GM10248 (cell line): ENCODE measurements at regions of chr22 and their contacts with region 1.

Region 1: DNA sequence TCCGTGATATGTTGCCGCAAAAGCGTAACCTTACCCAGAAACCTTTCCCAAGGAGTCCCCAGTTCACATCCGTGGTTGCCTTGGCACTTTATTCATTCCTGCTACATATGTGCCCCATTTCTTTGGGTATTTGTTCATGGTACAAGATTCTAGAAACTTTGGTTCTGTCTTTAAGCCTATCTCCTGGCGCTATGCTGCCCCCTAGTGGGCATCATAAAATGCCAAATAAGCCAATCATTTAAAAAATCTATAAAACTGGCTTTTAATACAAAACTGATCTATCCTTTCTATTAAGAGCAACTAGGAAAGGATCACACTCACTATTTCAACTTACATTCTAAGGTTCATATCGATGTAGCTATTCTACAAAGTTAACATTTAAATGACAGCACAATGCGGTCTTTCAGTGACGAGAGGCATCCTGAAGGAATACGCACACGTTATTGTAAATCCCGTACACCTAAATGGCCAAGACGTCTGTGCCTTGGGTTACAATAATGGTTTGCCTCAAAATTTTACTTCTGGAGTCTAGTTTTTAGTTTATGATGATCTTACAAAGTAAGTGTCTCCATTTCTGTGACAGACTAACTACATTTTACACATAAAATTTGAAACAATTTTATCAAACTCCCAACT is 16.2 kb downstream of the PIWIL3 start:
- DNase-seq: peak; percentile 50
- CTCF ChIP-seq: peak; percentile 70

Region 2: GRCh38 chr22:24695561-24696511 is 62.4 kb before region 1 on chr22:
- CTCF ChIA-PET with region 1: no interaction called
- POLR2A ChIA-PET with region 1: no interaction called
- DNase-seq: no peak
- CTCF ChIP-seq: no peak

Region 3: GRCh38 chr22:24768537-24769374 is 10.5 kb after region 1 on chr22:
- CTCF ChIA-PET with region 1: interaction called, 28 read pairs
- POLR2A ChIA-PET with region 1: no interaction called
- DNase-seq: peak; percentile 60
- CTCF ChIP-seq: peak; percentile 38